Prostate gland (tissue), 2 donors: ENCODE measurements at regions of chr5 and their contacts with region 1.

Region 1: DNA sequence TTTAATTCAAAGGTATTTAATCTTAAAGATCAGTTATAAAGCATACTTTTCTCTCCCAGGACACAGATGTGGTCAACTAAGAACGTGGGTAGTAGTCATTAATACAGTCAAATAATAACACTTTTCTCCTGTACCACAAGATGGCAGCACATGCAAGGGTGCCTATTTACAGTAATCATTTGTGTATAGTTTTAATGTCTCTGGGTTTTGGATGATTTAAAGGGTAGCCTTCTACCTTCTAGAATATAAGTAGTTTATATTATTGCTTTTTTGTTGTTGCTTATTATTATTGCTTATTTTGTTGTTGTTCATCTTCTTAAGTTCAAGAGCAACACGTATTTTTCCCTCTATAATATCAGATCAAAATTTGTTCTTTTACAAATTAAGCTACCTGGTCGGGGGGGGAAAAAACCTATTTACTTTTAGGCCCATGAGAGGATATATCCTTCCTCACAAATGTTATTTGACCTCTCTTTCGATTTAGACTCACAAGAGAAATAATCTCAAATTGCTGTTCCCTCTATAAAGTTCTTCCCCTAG is 59.6 kb upstream of the SLC27A6 start:
- DNase-seq: peak; percentile 39
- H3K4me3 ChIP-seq: no peak overlapping the region
- H3K27ac ChIP-seq: no peak overlapping the region
- H3K4me1 ChIP-seq: no peaks in the 10 kb centered on the region
- H3K27me3 ChIP-seq: peaks cover 3% of the 10 kb centered on the region
- CTCF ChIP-seq: peak; percentile 50 to 84 (median 75)
- POLR2A ChIP-seq: no peak

Region 2: DNA sequence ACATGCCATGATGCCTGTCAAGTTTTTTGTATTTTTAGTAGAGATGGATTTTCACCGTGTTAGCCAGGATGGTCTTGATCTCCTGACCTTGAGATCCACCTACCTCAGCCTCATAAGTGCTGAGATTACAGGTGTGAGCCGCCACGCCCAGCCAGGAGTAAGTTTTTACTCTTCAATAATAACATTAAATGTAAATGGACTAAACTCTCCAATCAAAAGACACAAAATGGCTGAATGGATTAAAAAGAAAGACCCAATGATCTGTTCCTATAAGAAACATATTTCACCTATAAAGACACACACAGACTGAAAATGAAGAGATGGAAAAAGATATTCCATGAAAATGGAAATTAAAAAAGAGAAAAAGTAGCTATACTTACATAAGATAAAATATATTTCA is 151.7 kb after region 1 on chr5:
- intact Hi-C with region 1: loop called (anchors 5 kb)
- DNase-seq: no peak
- H3K4me3 ChIP-seq: no peak overlapping the region
- H3K27ac ChIP-seq: no peak overlapping the region
- H3K4me1 ChIP-seq: no peaks in the 10 kb centered on the region
- H3K27me3 ChIP-seq: no peaks in the 10 kb centered on the region
- CTCF ChIP-seq: no peak
- POLR2A ChIP-seq: no peak